A673 (cell line): ENCODE measurements at regions of chr16 and their contacts with region 1.

Region 1: GRCh38 chr16:89422905-89423630 is 67.3 kb downstream of the ANKRD11 start:
- DNase-seq: no peak
- H3K4me3 ChIP-seq: no peak overlapping the region
- H3K27ac ChIP-seq: no peak overlapping the region
- H3K4me1 ChIP-seq: no peaks in the 10 kb centered on the region
- H3K27me3 ChIP-seq: no peaks in the 10 kb centered on the region
- CTCF ChIP-seq: no peak

Region 2: GRCh38 chr16:89410794-89411309 is 12.2 kb before region 1 on chr16:
- CTCF ChIA-PET with region 1: no interaction called
- POLR2A ChIA-PET with region 1: interaction called, 14 read pairs
- intact Hi-C with region 1: no loop called
- DNase-seq: no peak
- H3K4me3 ChIP-seq: no peak overlapping the region
- H3K27ac ChIP-seq: no peak overlapping the region
- H3K4me1 ChIP-seq: peaks cover 15% of the 10 kb centered on the region
- H3K27me3 ChIP-seq: no peaks in the 10 kb centered on the region
- CTCF ChIP-seq: no peak

Region 3: GRCh38 chr16:89476804-89477261 is 53.8 kb after region 1 on chr16:
- CTCF ChIA-PET with region 1: no interaction called
- POLR2A ChIA-PET with region 1: no interaction called
- intact Hi-C with region 1: no loop called
- DNase-seq: no peak
- H3K4me3 ChIP-seq: no peak overlapping the region
- H3K27ac ChIP-seq: no peak overlapping the region
- H3K4me1 ChIP-seq: peaks cover 15% of the 10 kb centered on the region
- H3K27me3 ChIP-seq: no peaks in the 10 kb centered on the region
- CTCF ChIP-seq: no peak